ENCODE measurements at regions of chr11 and their contacts with region 1.

Region 1: DNA sequence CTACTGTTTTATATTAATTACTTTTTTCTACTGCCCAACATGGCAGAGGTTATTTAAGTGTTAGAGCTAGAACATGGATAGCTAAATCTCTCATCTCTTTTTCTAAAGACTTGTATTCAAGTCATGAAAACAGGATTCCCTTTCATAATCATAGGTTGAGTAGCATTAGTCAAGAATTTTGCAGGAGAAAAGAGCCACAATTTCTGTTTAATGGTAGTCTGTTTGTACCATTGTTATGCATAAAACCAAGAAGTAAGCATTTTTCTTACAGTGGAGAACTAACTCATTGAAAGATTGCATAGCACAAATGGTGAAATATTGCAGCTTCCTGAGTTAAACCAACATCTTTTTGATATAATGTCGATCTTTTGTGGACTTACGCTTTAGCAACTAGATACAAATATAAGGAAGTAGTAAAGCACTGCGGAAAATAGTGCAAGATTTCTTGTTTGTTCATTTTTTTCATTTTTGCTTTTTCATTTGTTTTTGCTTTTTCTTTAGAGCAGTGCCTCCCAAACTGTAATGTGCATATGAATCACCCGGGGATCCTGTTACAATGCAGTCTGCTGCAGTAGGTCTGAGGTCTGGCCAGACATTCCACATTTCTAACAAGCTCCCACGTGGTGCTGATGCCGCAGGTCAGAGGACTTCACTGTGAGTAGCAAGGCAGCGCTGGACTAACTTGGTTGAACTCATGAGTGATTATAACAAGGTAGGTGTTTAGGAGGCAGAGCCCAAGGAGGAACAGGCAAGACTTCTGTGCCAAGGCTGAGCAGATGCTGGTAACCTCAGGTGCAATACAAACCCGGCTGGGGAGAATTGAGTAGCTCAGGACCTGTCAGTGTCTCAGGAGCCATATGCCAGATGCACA is 4.6 kb downstream of the ETS1 start:
- DNase-seq: no peak
- ATAC-seq: peak; percentile 34 to 50 (median 42)
- H3K4me3 ChIP-seq: no peak overlapping the region
- H3K4me3 Mint-ChIP-seq: peak overlapping the region in 2 of 3 donors; percentile 35 to 52
- H3K27ac ChIP-seq: no peak overlapping the region
- H3K27ac Mint-ChIP-seq: peak overlapping the region; percentile 51 to 66
- H3K4me1 ChIP-seq: peaks cover 0 to 8% of the 10 kb centered on the region in 2 experiments
- H3K4me1 Mint-ChIP-seq: peaks cover 41 to 67% (median 44%) of the 10 kb centered on the region in 3 donors
- H3K27me3 ChIP-seq: peaks cover 0 to 4% of the 10 kb centered on the region in 2 experiments
- H3K27me3 Mint-ChIP-seq: peaks cover 0 to 2% of the 10 kb centered on the region in 2 donors

Region 2: DNA sequence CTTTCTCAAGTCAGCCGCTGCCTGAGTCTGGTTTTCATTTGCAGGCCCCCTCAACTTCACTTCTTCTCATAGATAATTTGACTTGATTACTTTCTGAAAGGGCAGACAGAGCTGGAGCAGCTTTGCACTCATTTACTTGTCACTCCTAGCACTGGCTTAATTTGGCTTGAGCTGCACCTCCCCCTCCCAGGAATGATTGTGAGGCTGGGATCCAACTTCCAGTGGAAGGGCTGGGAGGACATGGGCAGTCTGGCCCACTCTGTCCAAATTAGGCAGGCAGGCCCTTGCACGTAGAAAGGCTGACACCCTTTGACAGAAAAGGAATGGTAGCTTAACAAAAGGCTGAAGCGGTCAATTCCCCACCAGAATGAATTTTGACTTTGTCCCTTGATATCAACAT is 449.2 kb before region 1 on chr11:
- CTCF ChIA-PET with region 1: no interaction called
- POLR2A ChIA-PET with region 1: interaction called in 1 of 2 experiments, 11 read pairs
- DNase-seq: no peak
- ATAC-seq: no peak
- H3K4me3 ChIP-seq: no peak overlapping the region
- H3K4me3 Mint-ChIP-seq: no peak overlapping the region
- H3K27ac ChIP-seq: no peak overlapping the region
- H3K27ac Mint-ChIP-seq: no peak overlapping the region
- H3K4me1 ChIP-seq: no peaks in the 10 kb centered on the region
- H3K4me1 Mint-ChIP-seq: peaks cover 4 to 24% (median 9%) of the 10 kb centered on the region in 3 donors
- H3K27me3 ChIP-seq: no peaks in the 10 kb centered on the region
- H3K27me3 Mint-ChIP-seq: no peaks in the 10 kb centered on the region

Region 3: GRCh38 chr11:128235958-128236357 is 346.8 kb before region 1 on chr11:
- CTCF ChIA-PET with region 1: no interaction called
- POLR2A ChIA-PET with region 1: no interaction called
- DNase-seq: no peak
- ATAC-seq: no peak
- H3K4me3 ChIP-seq: no peak overlapping the region
- H3K4me3 Mint-ChIP-seq: no peak overlapping the region
- H3K27ac ChIP-seq: no peak overlapping the region
- H3K27ac Mint-ChIP-seq: no peak overlapping the region
- H3K4me1 ChIP-seq: peaks cover 4% of the 10 kb centered on the region in 2 experiments
- H3K4me1 Mint-ChIP-seq: peaks cover 13 to 21% (median 13%) of the 10 kb centered on the region in 3 donors
- H3K27me3 ChIP-seq: no peaks in the 10 kb centered on the region
- H3K27me3 Mint-ChIP-seq: no peaks in the 10 kb centered on the region

Region 4: DNA sequence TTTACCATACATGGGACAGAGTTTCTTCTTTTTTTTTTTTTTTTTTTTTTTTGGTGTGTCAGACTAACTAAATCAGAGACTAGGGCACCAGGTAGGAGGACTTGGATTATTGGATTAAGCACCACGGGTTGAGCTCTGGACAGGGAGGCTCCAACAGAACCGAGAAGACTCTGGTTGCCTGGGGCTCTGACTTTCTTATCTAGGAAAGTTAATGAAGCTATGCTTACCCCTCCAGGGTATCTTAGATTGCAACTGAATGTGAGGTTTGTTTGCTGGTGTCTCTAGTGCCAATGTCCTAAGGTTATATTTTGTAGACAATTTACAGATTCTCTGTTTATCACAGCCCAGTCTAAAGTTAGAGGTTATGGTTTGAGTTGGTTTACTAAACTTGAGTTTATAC is 13.4 kb before region 1 on chr11:
- CTCF ChIA-PET with region 1: interaction called in 1 of 2 experiments, 3 read pairs
- POLR2A ChIA-PET with region 1: interaction called in 1 of 2 experiments, 10 read pairs
- DNase-seq: no peak
- ATAC-seq: no peak
- H3K4me3 ChIP-seq: no peak overlapping the region
- H3K4me3 Mint-ChIP-seq: no peak overlapping the region
- H3K27ac ChIP-seq: no peak overlapping the region
- H3K27ac Mint-ChIP-seq: no peak overlapping the region
- H3K4me1 ChIP-seq: peaks cover 0 to 7% of the 10 kb centered on the region in 2 experiments
- H3K4me1 Mint-ChIP-seq: peaks cover 21 to 24% (median 24%) of the 10 kb centered on the region in 3 donors
- H3K27me3 ChIP-seq: no peaks in the 10 kb centered on the region
- H3K27me3 Mint-ChIP-seq: no peaks in the 10 kb centered on the region

Measured in T-cell (primary cell).